HCT116 (cell line): ENCODE measurements at regions of chr5 and their contacts with region 1.

Region 1: GRCh38 chr5:50962934-50963872 is 296.8 kb downstream of the PARP8 start:
- DNase-seq: peak; percentile 48
- ATAC-seq: peak; percentile 99
- H3K4me3 ChIP-seq: no peak overlapping the region
- H3K27ac ChIP-seq: no peak overlapping the region
- H3K4me1 ChIP-seq: no peaks in the 10 kb centered on the region; a peak in 1 of 4 replicates
- H3K27me3 ChIP-seq: no peaks in the 10 kb centered on the region
- CTCF ChIP-seq: peak; percentile 98 to 99 (median 99)
- POLR2A ChIP-seq: no peak
- RAD21 ChIP-seq: peak; percentile 93

Region 2: DNA sequence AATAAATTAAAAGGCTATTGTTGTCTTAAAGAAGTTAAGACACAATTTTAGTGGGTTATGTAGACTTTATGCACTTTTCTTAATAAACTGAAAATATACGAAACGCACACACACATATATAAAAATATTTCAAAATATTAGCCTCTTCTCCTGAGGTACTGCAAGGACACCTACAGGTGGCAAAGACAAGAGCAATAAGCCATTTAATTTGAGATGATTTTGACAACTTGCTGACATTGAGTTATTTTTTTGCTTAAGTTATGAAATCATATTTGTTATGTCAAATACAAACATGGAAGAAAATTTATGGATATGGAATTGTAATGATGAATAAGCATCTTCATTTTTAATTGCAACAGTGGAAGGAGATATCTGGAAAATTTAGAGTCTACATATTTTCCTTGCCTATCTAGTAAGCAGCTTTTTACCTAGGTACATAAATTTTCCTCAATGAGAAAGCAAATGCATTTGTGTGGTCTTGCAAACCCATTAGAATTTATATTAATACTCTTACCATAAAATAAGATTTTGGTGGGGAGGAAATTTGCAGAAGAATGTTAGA is 721.7 kb after region 1 on chr5:
- CTCF ChIA-PET with region 1: no interaction called
- POLR2A ChIA-PET with region 1: no interaction called
- RAD21 ChIA-PET with region 1: no interaction called
- intact Hi-C with region 1: loop called (anchors 2 kb)
- DNase-seq: no peak
- ATAC-seq: no peak
- H3K4me3 ChIP-seq: no peak overlapping the region
- H3K27ac ChIP-seq: no peak overlapping the region
- H3K4me1 ChIP-seq: no peaks in the 10 kb centered on the region
- H3K27me3 ChIP-seq: no peaks in the 10 kb centered on the region
- CTCF ChIP-seq: peak; percentile 23 to 36 (median 35); a peak in 2 of 6 replicates
- POLR2A ChIP-seq: no peak
- RAD21 ChIP-seq: peak; percentile 52

Region 3: DNA sequence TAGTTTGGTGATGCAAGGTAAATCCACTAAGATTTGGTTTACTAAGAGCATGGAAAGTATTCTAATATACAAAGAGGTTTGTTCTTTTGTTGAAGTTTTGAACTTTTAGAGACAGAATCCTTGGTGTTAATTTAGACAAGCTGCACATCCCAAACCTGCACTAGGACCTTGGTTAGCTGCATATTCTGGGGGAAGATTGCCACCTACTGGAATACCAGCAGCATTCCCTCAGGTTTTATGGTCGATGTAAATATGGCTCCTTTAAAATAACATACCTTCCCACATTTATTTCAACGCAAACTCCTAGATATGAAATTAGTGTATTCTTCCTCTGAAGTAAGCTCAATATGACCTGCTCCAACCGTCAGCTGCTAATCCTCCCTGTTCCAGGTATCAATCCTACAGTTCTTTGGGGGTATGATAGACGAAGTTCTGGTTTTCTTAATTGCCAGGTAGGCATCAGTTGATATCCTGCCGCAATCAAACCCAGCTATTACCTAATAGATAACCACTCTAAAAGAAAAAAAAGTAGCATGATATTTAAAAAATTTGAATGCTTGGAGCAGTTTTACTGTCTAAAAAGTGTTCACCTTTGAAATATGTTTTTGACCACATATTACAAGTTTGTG is 1044.1 kb after region 1 on chr5:
- CTCF ChIA-PET with region 1: interaction called, 6 read pairs
- POLR2A ChIA-PET with region 1: no interaction called
- RAD21 ChIA-PET with region 1: no interaction called
- intact Hi-C with region 1: loop called (anchors 1 kb)
- DNase-seq: peak; percentile 16
- ATAC-seq: peak; percentile 70
- H3K4me3 ChIP-seq: no peak overlapping the region
- H3K27ac ChIP-seq: no peak overlapping the region
- H3K4me1 ChIP-seq: no peaks in the 10 kb centered on the region
- H3K27me3 ChIP-seq: no peaks in the 10 kb centered on the region
- CTCF ChIP-seq: peak; percentile 37 to 70 (median 57); a peak in 5 of 6 replicates
- POLR2A ChIP-seq: no peak
- RAD21 ChIP-seq: peak; percentile 69

Region 4: GRCh38 chr5:52356311-52356918 is 1393.2 kb after region 1 on chr5:
- CTCF ChIA-PET with region 1: interaction called, 5 read pairs
- POLR2A ChIA-PET with region 1: no interaction called
- RAD21 ChIA-PET with region 1: no interaction called
- intact Hi-C with region 1: loop called (anchors 2 kb)
- DNase-seq: no peak
- ATAC-seq: no peak
- H3K4me3 ChIP-seq: no peak overlapping the region
- H3K27ac ChIP-seq: no peak overlapping the region
- H3K4me1 ChIP-seq: no peaks in the 10 kb centered on the region
- H3K27me3 ChIP-seq: no peaks in the 10 kb centered on the region
- CTCF ChIP-seq: peak; percentile 30 to 79 (median 57); a peak in 5 of 6 replicates
- POLR2A ChIP-seq: no peak
- RAD21 ChIP-seq: peak; percentile 65

Region 5: DNA sequence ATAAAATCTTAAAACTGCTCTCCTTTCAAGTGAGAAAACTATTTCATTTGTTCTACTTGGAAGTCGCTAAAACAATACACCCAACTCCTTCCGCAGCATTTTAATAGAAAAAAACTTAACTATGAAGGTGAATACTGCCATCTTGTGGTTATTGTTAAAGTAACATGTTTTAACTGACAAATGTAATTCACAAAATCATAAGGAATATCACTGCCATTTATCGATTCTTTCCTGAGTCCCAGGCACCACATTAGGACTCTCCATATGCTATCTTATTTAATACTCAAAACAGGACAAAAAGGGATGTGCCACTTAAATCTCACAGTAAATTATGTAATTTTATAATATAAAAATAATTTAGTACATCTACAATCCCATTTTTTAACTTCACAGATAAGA is 1694.0 kb after region 1 on chr5:
- CTCF ChIA-PET with region 1: interaction called, 6 read pairs
- POLR2A ChIA-PET with region 1: no interaction called
- RAD21 ChIA-PET with region 1: no interaction called
- intact Hi-C with region 1: loop called (anchors 1 kb)
- DNase-seq: peak; percentile 42
- ATAC-seq: peak; percentile 61
- H3K4me3 ChIP-seq: no peak overlapping the region
- H3K27ac ChIP-seq: no peak overlapping the region
- H3K4me1 ChIP-seq: no peaks in the 10 kb centered on the region
- H3K27me3 ChIP-seq: no peaks in the 10 kb centered on the region
- CTCF ChIP-seq: peak; percentile 20 to 60 (median 42); a peak in 4 of 6 replicates
- POLR2A ChIP-seq: no peak
- RAD21 ChIP-seq: peak; percentile 66